Activated CD4-positive, alpha-beta T cell treated with anti-CD3 and anti-CD28 coated beads, Interleukin-2, amount 10 ng/mL, durations not matched to agents 24 days and 14 days (primary cell): ENCODE measurements at regions of chr16 and their contacts with region 1.

Region 1: GRCh38 chr16:53530046-53530445 is 27.0 kb upstream of the AKTIP start:
- DNase-seq: no peak
- H3K4me3 Mint-ChIP-seq: no peak overlapping the region
- H3K27ac Mint-ChIP-seq: no peak overlapping the region
- H3K4me1 Mint-ChIP-seq: peaks cover 10% of the 10 kb centered on the region
- H3K27me3 Mint-ChIP-seq: no peaks in the 10 kb centered on the region

Region 2: DNA sequence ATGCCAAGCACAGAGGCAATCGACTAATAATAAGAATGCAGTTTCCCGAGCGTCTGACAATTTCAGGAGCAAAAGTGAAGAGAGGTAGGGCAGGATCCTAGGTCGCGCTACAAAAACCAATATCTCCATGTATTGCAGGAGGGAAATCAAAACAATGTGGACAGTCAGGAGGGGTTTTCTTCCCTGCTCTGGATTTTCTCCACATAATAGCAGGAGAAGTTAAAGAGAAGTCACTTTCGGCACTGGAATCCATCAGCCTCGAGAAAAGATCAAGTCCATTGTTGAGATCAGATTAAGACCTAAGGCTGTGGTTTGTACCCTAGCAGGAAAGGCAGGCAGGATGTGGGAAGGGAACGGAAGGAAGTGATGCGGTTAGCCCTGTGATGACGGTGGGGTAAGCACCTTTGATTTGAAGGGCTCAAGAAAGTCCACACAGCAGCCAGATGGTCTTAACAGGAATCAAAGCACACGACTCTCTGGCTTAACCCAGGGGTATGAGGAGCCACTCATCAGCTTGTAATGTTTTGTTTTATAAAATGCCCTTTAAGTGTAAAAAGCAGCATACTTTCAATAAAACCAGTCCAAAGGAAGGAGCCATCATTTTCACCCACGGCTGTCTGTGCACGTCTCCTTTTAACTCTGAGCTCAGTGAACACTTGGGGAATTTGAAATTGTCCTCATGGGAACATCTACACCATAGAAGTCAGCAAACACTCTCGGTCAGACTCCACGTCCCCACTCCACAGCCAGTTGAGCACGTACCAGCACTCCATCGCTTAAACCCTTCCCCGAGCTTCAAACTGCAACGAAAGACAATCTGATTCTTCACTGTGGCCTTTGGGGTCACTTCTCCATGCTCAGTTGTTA is 11.3 kb before region 1 on chr16:
- intact Hi-C with region 1: loop called (anchors 1 kb)
- DNase-seq: peak; percentile 95
- H3K4me3 Mint-ChIP-seq: peak overlapping the region; percentile 73
- H3K27ac Mint-ChIP-seq: peak overlapping the region; percentile 83
- H3K4me1 Mint-ChIP-seq: peaks cover 54% of the 10 kb centered on the region
- H3K27me3 Mint-ChIP-seq: no peaks in the 10 kb centered on the region

Region 3: DNA sequence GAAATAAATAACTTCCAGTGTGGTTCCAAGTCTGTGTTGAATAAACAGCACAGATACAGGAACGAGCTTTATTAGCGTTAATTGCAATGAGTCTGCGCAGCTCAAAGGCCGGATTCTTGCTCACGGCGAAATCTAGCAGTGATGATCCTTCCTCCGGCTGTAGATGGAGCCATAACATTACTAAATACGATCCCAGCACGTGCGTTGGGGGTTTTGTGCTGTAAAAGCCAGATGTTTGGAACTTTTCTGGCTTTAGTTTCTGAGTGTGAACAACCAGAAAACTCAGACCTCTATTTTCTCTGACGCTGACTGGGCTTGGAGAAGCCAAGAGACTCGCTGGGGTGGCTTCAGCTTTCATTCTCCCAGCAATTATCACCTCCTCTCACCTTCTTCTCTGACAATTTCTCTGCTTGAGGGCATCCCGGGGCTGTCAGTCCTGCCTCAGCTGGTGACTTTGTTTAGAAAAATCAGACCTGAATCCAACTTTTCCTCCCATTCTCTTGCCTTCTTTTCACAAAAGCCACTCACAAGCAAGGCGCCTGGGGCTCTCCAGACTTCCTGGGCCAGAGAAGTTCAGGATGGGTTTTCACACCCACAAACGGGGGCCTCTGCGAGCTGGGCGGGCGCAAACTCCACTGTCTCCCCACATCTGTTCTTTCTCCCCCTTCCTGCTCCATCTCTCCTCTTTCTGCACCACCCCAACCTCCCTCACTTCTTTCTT is 20.1 kb after region 1 on chr16:
- intact Hi-C with region 1: no loop called
- DNase-seq: peak; percentile 85
- H3K4me3 Mint-ChIP-seq: no peak overlapping the region
- H3K27ac Mint-ChIP-seq: no peak overlapping the region
- H3K4me1 Mint-ChIP-seq: peaks cover 26% of the 10 kb centered on the region
- H3K27me3 Mint-ChIP-seq: peaks cover 33% of the 10 kb centered on the region

Region 4: GRCh38 chr16:53664724-53665345 is 134.8 kb after region 1 on chr16:
- intact Hi-C with region 1: loop called (anchors 10 kb)
- DNase-seq: no peak
- H3K4me3 Mint-ChIP-seq: no peak overlapping the region
- H3K27ac Mint-ChIP-seq: no peak overlapping the region
- H3K4me1 Mint-ChIP-seq: peaks cover 4% of the 10 kb centered on the region
- H3K27me3 Mint-ChIP-seq: no peaks in the 10 kb centered on the region

Region 5: DNA sequence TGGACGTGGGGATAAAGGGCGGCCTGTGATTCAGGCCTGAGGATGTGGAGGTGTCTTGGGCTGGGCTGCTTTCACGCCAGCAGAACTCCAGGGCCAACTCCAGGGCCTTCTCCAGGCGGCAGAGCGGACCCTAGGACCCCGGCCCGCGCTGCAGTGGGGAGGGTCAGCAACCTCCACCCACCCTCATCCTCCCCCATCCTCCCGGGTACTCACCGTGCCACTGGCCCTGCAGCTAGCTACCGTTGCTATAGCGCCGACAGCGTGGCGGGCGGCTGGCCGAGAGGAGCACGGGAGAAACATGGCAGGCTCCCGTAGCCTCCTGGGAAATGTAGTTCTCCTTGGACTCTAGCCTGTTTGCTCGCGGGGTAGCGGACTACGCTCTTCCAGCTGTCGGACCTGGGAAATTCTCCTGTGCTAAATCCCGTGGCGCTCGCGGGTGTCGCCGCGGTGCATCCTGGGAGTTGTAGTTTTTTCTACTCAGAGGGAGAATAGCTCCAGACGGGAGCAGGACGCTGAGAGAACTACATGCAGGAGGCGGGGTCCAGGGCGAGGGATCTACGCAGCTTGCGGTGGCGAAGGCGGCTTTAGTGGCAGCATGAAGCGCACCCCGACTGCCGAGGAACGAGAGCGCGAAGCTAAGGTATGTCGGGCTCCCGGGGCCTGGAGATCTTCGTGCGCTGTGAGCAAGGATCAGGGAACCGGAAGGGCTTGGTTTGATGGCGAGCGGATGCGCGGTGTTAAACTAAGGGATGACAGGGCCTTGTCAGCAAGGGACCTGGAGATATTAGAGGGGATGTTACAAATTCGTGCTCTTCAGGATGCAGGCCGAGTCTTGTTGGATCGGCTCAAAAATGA is 173.8 kb after region 1 on chr16 and contains the starts of genes FTO and RPGRIP1L:
- intact Hi-C with region 1: loop called (anchors 10 kb)
- DNase-seq: peak; percentile 99
- H3K4me3 Mint-ChIP-seq: peak within 1 kb of the TSS; percentile 93
- H3K27ac Mint-ChIP-seq: peak within 1 kb of the TSS; percentile 92
- H3K4me1 Mint-ChIP-seq: peaks cover 16% of the 10 kb centered on the region
- H3K27me3 Mint-ChIP-seq: no peaks in the 10 kb centered on the region
- total RNA-seq, gene FTO: 60.8 and 61.1 TPM in 2 replicates
- total RNA-seq, gene RPGRIP1L: 9.9 and 10.0 TPM in 2 replicates

Region 6: GRCh38 chr16:53865494-53865863 is 335.4 kb after region 1 on chr16:
- intact Hi-C with region 1: loop called (anchors 1 kb)
- DNase-seq: peak; percentile 51
- H3K4me3 Mint-ChIP-seq: peak overlapping the region; percentile 58
- H3K27ac Mint-ChIP-seq: peak overlapping the region; percentile 89
- H3K4me1 Mint-ChIP-seq: peaks cover 16% of the 10 kb centered on the region
- H3K27me3 Mint-ChIP-seq: no peaks in the 10 kb centered on the region